ENCODE measurements at regions of chr2 and their contacts with region 1.

Region 1: DNA sequence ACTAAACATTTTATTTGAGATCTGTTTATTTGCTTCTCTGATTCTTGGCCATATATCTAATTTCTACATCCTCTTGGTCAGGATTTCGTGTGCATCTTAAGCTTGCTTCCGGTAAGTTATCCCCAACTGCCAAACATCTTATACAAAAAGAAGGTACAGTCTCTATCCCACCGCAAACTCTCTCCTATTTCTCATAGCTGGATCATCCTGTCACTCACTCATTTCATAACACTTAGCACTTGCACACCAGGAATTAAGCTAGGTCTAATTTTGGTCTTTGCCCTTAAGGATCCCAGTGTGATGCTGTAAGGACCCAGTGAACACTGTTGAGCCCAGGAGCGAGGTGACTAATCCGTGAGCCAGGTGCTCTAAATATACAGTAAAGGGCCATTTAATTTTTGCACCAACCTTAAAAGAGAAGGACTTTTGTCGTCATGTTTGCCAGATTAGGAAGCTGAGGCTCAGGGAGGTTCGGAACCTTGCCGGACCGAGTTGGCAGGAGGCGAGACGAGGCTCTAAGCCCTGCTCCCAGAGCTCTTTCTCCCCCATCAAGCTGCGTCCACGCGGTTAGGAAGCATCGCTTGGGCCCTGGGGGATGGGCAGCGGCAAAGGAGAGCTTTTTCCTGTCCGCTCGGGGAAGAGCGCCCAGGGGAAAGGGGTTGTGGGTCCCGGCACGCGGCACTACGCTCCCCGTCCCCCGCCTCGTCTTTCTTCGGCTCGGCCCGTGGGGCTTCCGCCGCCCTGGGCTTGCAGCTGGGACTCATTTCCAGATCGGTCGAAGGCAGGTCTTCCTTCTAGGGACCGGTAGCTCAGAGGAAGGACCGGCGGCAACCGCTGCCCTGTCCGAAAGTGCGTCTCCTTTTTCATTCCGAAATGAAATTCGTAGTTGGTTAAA is 4.1 kb upstream of the ITPRIPL1 start:
- DNase-seq: peak in 1 of 2 experiments; percentile 71
- H3K4me3 ChIP-seq: peak overlapping the region; percentile 47 to 71 (median 65)
- H3K27ac ChIP-seq: no peak overlapping the region
- H3K4me1 ChIP-seq: peaks cover 3 to 9% (median 3%) of the 10 kb centered on the region in 4 experiments; a peak in 6 of 7 replicates
- H3K27me3 ChIP-seq: peaks cover 3 to 46% (median 33%) of the 10 kb centered on the region in 4 experiments
- CTCF ChIP-seq: no peak
- EP300 ChIP-seq: no peak
- POLR2A ChIP-seq: no peak
- RAD21 ChIP-seq: no peak

Region 2: GRCh38 chr2:96305091-96305978 is 15.6 kb before region 1 on chr2 and contains the start of gene SNRNP200:
- CTCF ChIA-PET with region 1: interaction called, 4 read pairs
- POLR2A ChIA-PET with region 1: interaction called, 28 read pairs
- DNase-seq: peak; percentile 41 to 89
- H3K4me3 ChIP-seq: peak within 1 kb of the TSS; percentile 79 to 98 (median 86)
- H3K27ac ChIP-seq: peak within 1 kb of the TSS; percentile 82; the same call in 1 of the 2 replicates
- H3K4me1 ChIP-seq: peaks cover 0 to 13% (median 4%) of the 10 kb centered on the region in 4 experiments; a peak in 4 of 7 replicates
- H3K27me3 ChIP-seq: no peaks in the 10 kb centered on the region
- CTCF ChIP-seq: no peak
- EP300 ChIP-seq: 0 out of 3 replicates have a peak, but pooled peaks of 1 of the 2 experiments have one; percentile 4
- POLR2A ChIP-seq: peak; percentile 60 to 85
- RAD21 ChIP-seq: 0 out of 4 replicates have a peak, but pooled peaks of 1 of the 2 experiments have one; percentile 6
- total RNA-seq, gene SNRNP200: 190 and 199 TPM in 2 replicates

Region 3: DNA sequence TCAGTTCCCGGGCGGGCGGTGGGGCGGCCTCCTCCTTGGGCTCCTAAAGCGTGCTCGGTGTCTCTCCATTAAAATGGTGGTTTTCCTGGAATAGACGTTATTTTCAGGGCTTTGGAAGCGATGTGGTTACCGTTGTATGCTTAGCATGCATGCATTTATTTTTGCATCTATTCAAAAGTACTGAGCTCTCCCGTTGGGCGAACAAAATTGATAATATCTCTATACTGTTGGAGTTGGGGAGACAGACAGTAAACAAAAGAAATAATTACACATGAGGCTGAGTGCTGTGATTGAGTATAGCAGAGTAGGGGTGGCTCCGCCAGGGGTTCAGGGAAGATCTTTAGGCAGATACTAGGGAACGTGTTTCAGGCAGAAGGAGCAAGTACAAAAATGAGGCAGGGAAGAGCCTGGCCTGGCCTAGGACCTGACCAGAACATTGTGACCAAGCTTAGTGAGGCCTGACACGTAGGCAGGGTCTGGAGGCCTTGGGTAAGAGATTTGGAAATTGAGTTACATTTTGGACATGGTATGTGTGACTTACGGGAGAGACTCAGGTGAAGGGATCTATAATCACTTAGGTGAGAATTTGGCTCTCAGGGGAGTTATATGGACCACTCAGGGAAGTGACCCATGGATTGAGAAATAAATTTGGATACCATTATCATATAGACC is 15.3 kb after region 1 on chr2:
- CTCF ChIA-PET with region 1: interaction called, 5 read pairs
- POLR2A ChIA-PET with region 1: interaction called, 26 read pairs
- DNase-seq: no peak
- H3K4me3 ChIP-seq: peak overlapping the region; percentile 65 to 79 (median 74)
- H3K27ac ChIP-seq: peak overlapping the region; percentile 54
- H3K4me1 ChIP-seq: peaks cover 2 to 5% (median 3%) of the 10 kb centered on the region in 4 experiments; a peak in 4 of 7 replicates
- H3K27me3 ChIP-seq: no peaks in the 10 kb centered on the region
- CTCF ChIP-seq: no peak
- EP300 ChIP-seq: no peak
- POLR2A ChIP-seq: peak; percentile 73 to 82; a peak in 2 of 3 replicates
- RAD21 ChIP-seq: no peak

Region 4: DNA sequence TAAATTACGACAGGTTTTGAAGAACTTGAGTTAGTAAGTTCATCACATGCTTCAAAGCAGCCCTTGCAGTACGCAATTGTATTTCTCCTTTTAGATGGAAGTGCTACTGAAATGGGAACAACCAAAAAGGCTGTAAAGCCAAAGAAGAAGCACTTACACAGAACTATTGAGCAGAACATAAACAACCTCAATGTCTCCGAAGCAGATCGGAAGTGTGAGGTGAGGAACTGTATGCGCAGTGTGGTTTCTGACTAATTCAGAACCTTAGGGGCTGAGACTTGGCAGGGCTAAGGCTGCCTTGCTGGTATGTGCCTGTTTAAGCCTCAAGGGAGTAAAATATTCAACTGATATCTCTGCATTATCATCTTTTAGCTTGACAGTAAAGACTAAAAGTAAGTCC is 23.0 kb after region 1 on chr2:
- CTCF ChIA-PET with region 1: interaction called, 16 read pairs
- POLR2A ChIA-PET with region 1: interaction called, 4 read pairs
- DNase-seq: no peak
- H3K4me3 ChIP-seq: no peak overlapping the region
- H3K27ac ChIP-seq: no peak overlapping the region
- H3K4me1 ChIP-seq: no peaks in the 10 kb centered on the region; a peak in 1 of 7 replicates
- H3K27me3 ChIP-seq: no peaks in the 10 kb centered on the region
- CTCF ChIP-seq: no peak
- EP300 ChIP-seq: no peak
- POLR2A ChIP-seq: no peak
- RAD21 ChIP-seq: no peak